ENCODE measurements at regions of chr12 and their contacts with region 1.

Region 1: DNA sequence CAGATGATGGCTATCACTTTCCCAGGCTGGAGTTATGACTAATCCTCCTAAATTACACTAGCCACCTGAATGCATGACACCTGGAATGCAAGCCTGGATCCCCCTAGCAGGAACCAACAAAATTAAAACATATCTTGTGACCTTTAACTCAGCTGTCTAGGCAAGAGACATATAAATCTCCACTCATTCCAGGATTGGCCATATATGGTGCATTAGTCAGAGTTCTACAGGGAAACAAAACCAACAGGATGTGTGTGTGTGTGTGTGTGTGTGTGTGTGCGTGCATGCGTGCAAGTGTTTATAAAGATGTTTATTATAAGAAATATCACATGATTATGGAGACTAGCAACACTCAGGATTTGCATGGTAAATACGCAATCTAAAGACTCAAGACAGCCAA is 212.8 kb downstream of the KIF21A start:
- DNase-seq: no peak

Region 2: DNA sequence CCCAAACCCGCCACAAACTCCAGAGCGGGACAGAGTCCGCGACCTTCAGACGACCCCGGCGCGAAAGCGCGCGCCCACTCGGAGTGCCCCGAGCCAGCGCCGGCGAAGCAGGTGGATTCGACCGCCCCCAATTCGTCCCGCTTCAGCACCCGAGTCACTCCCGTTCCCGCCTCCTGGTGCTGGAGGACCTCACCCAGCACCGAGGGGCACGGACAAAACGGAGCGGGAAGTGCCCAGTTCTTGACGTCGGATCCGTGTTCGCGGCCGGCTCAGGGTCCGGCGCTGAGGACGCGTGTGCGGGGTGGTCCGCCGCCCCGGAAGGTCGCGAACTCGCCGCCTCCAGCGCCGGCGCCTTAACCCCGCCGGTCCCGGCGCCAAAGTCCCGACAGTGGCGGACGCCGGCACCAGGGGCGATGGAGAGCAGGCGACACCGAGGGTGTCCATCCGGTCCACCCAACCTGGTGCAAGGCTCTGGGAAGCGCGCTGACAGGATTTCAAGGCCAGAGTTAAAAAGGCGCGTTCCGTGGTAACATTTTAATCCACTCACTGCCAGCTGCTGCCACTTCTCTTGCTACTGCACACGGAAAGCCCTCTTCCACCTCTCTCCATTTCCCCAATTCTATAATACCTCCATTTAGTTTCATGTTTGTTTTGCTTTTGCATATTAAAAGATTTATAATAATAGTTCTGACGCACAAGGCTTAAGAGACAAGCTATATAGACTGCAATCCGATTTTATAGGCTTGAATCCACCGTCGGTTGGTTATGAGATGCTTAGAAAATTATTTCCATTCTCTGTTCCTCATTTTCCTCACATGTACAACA is 84.7 kb before region 1 on chr12:
- intact Hi-C with region 1: no loop called
- DNase-seq: no peak

Region 3: DNA sequence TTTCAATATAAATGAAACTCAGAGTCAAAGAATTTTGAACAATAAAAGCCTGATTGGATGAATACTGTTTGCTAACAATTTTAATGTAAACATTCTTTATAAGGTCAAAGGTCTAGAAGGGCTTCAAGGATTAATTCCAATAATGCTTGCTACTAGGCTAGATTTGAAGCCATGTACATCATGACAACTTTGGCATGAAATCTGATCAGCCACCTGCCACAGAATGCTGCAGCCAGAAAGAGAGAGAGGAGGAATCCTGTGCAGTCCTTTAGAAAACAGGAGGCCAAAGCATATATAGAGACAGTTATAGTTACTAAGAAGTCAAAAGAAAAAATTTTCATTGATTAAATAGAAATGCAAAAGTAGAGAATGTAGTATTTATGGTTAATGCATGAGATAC is 342.5 kb after region 1 on chr12:
- intact Hi-C with region 1: no loop called
- DNase-seq: no peak

Region 4: DNA sequence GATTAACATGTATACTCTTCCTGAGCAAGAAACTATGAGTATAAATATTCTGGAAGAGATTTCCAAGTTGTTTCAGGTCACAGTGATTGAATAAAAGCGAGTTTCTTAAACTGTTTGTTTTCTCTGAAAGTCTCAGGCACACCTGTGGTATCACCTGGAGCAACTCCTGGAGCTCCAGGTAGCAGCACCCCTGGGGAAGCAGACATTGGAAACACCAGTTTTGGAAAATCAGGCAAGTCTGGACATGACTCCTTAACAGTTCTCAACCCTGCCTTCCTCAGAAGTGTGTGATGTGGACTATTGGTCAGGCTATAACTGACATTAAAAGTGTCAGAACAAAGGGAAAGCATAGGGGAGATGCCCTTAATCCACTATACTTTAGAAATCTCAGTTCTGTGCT is 1244.5 kb after region 1 on chr12:
- intact Hi-C with region 1: loop called in 1 of 2 experiments (anchors 5 kb)
- DNase-seq: no peak

Region 5: DNA sequence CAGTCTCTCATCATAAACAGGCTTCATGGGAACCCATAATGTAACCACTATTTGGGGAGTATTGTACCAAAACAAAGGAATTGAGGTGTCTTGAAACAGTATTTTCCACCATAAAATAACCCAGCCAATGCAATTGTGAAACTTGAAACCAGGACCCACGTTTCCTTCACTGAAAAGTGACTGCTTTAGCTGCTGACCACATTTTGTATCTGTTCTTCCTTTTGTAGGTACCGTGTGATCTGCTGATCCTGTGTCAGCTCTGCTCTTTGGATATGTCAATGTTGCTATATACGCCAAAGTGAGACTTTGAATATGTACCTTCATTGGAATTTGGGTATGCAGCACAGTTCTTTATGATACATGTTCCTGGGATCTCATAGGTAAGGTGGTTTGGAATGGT is 1367.0 kb after region 1 on chr12:
- intact Hi-C with region 1: no loop called
- DNase-seq: no peak

Measured in posterior vena cava (tissue), 2 donors.